Activated B cell treated with CpG ODN at 0.5 μM for 24 hours (primary cell): ENCODE measurements at regions of chr12 and their contacts with region 1.

Region 1: DNA sequence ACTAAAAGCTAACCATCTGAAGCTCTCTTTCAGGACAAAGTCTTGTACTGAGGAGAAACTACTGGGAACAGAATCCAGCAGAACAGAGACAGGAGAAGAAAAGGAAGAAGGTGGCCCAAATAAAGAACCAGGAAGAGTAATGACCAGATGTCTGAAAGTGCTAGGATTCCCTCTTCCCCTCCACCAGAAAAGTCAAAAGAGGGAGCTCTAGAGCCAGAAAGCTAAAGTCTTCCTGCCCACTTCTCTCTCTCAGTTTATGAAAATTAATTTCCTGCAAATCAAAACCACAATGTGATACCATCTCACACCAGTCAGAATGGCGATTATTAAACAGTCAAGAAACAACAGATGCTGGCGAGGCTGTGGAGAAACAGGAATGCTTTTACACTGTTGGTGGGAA is 47.2 kb downstream of the SPPL3 start:
- DNase-seq: no peak
- ATAC-seq: peak; percentile 50
- H3K4me3 Mint-ChIP-seq: peak overlapping the region; percentile 52
- H3K27ac Mint-ChIP-seq: peak overlapping the region; percentile 55
- H3K4me1 Mint-ChIP-seq: peaks cover 68% of the 10 kb centered on the region
- H3K27me3 Mint-ChIP-seq: no peaks in the 10 kb centered on the region
- CTCF ChIP-seq: no peak

Region 2: DNA sequence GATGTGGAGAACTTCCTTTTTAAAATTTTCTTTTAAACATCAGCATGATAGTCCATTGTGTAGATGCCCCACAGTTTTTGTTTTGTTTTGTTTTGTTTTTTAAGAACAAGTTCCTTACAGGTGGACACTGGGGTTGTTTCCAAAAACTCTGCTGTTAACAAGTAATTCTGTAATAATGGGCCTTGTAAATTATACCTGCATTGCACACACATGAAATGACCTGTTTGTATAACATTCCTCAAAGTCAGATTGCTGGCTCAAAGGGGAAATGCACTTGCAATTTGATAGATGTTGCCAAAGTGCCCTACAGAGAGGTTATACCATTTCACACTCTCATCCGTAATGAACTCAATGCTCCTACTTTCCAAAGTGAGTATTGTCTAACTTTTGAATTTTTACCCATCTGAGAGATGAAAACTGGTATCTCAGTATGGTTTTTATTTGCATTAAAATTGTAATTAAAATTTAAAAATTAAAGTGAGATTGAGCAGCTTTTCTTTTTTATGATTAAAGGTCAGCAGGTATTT is 42.0 kb before region 1 on chr12:
- CTCF ChIA-PET with region 1: no interaction called
- POLR2A ChIA-PET with region 1: interaction called, 13 read pairs
- intact Hi-C with region 1: loop called (anchors 5 kb)
- DNase-seq: no peak
- ATAC-seq: no peak
- H3K4me3 Mint-ChIP-seq: no peak overlapping the region
- H3K27ac Mint-ChIP-seq: no peak overlapping the region
- H3K4me1 Mint-ChIP-seq: peaks cover 15% of the 10 kb centered on the region
- H3K27me3 Mint-ChIP-seq: no peaks in the 10 kb centered on the region
- CTCF ChIP-seq: no peak

Region 3: GRCh38 chr12:120820885-120821510 is 36.0 kb before region 1 on chr12:
- CTCF ChIA-PET with region 1: no interaction called
- POLR2A ChIA-PET with region 1: interaction called, 13 read pairs
- intact Hi-C with region 1: loop called (anchors 5 kb)
- DNase-seq: no peak
- ATAC-seq: no peak
- H3K4me3 Mint-ChIP-seq: no peak overlapping the region
- H3K27ac Mint-ChIP-seq: no peak overlapping the region
- H3K4me1 Mint-ChIP-seq: peaks cover 23% of the 10 kb centered on the region
- H3K27me3 Mint-ChIP-seq: no peaks in the 10 kb centered on the region
- CTCF ChIP-seq: no peak